ENCODE measurements at regions of chr6 and their contacts with region 1.

Region 1: GRCh38 chr6:136317021-136317694 is 27.5 kb upstream of the BCLAF1 start:
- DNase-seq: peak; percentile 69
- H3K4me3 Mint-ChIP-seq: no peak overlapping the region
- H3K27ac Mint-ChIP-seq: no peak overlapping the region
- H3K4me1 Mint-ChIP-seq: no peaks in the 10 kb centered on the region
- H3K27me3 Mint-ChIP-seq: no peaks in the 10 kb centered on the region

Region 2: DNA sequence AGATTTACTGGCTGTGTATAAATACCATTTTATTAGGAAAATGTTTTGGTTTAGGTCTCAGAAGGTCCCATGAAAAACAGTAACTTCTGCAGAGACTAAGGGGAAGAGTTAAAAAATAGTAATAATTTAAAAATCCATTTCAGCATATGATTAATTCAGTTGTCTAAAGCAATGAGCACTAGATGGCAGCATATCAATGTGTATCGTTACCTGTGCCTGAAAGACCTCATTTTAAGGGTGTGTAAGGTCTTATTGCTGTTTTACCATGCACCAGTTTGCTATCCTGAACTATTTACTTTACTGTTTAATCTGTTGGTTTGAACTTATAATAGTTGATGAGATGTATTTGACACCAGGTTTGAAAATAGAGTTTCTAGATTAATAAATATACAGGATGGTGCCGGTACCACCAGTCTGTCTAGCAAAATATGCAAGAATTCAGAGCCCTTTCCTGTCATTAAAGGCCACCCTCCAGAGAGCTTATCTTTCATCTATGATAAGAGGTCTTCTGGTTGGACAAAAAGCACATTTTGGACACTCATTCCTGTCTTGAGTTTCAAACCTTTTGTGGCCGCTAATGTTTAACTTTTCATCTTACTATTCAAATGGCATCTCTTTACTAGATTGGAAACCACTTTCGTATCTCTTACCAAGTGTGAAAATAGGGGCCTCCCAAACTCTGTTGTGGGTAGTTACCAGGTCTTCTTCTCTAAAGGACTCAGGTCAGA is 810.7 kb before region 1 on chr6:
- CTCF ChIA-PET with region 1: interaction called, 7 read pairs
- POLR2A ChIA-PET with region 1: no interaction called
- intact Hi-C with region 1: loop called (anchors 2 kb)
- DNase-seq: no peak
- H3K4me3 Mint-ChIP-seq: no peak overlapping the region
- H3K27ac Mint-ChIP-seq: no peak overlapping the region
- H3K4me1 Mint-ChIP-seq: peaks cover 6% of the 10 kb centered on the region
- H3K27me3 Mint-ChIP-seq: peaks cover under 1% of the 10 kb centered on the region